ENCODE measurements at regions of chr5 and their contacts with region 1.

Region 1: GRCh38 chr5:122291000-122291901 is 20.8 kb upstream of the SNCAIP start:
- DNase-seq: no peak
- ATAC-seq: no peak
- H3K4me3 ChIP-seq: no peak overlapping the region
- H3K27ac ChIP-seq: no peak overlapping the region
- H3K4me1 ChIP-seq: no peaks in the 10 kb centered on the region
- H3K27me3 ChIP-seq: no peaks in the 10 kb centered on the region
- CTCF ChIP-seq: no peak

Region 2: DNA sequence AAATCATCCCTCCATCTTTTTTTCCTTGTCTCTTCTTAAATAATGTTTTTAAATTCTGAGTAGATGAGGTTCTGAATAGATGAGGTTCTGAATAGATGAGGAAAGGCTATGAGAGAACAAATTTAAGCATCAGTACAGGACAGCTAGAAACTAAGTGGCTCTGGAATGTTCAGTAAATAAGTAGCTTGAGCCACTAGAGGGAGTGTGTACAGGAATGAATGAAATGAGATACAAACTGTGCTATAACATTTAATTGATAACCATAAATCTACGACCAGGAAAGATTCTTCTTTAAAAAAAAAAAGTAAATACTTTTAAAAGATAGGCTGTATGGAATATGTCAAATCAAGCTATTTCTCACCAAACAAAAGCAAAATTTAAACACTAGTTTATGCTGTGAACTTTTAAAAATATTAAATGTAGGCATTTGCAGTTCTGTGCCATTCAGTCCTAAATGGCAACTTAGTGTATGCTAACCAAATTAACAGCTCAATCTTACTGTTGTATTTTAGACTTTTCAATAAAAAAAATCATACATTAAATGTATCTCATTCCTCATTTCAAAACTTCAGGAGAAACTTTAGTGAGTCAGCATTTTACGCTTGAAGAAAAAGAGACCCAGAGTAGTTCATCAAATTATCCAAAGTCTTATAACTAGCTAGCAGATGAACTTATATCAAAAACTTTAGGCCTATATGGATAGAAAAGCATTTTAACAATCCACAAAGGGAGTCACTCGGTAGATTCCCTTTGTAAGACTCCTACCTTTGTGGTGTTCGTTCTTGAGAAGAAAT is 413.2 kb after region 1 on chr5:
- CTCF ChIA-PET with region 1: no interaction called
- POLR2A ChIA-PET with region 1: interaction called, 12 read pairs
- in situ Hi-C with region 1: no loop called
- intact Hi-C with region 1: no loop called
- DNase-seq: no peak
- ATAC-seq: peak; percentile 86
- H3K4me3 ChIP-seq: no peak overlapping the region
- H3K27ac ChIP-seq: 0 out of 2 replicates have a peak overlapping the region, but pooled peaks have one; percentile 21
- H3K4me1 ChIP-seq: no peaks in the 10 kb centered on the region
- H3K27me3 ChIP-seq: no peaks in the 10 kb centered on the region; the same call in 1 of the 2 replicates
- CTCF ChIP-seq: peak; percentile 75; the same call in 1 of the 2 replicates

Measured in Panc1 (cell line).